Left cardiac atrium (tissue), 4 donors: ENCODE measurements at regions of chr1 and their contacts with region 1.

Region 1: DNA sequence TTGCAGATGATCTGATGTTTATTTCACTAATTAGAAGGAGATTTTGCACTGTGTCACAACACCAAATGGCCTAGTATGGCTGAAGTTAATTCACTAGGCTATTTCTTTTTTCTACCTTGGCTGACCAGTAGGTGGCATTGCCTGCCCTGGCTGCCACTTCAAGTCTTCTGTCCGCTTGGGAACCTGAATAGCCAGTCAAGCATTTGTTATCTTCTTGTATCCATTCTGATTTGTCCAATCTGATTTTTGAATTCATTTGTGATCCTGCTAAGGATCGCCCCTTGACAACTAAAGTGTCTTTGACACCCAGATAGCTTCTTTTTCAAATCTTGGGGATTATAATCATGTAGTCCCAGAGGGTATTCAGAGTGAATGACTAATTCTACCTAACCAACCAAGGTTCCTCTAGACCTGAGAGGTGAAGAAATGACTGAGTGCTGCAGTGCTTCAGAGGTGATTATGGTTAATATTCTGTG is 99.4 kb downstream of the GIPC2 start:
- DNase-seq: peak; percentile 30
- ATAC-seq: peak; percentile 67 to 70

Region 2: GRCh38 chr1:78607334-78607927 is 462.3 kb after region 1 on chr1:
- intact Hi-C with region 1: loop called (anchors 5 kb)
- DNase-seq: no peak
- ATAC-seq: no peak

Region 3: DNA sequence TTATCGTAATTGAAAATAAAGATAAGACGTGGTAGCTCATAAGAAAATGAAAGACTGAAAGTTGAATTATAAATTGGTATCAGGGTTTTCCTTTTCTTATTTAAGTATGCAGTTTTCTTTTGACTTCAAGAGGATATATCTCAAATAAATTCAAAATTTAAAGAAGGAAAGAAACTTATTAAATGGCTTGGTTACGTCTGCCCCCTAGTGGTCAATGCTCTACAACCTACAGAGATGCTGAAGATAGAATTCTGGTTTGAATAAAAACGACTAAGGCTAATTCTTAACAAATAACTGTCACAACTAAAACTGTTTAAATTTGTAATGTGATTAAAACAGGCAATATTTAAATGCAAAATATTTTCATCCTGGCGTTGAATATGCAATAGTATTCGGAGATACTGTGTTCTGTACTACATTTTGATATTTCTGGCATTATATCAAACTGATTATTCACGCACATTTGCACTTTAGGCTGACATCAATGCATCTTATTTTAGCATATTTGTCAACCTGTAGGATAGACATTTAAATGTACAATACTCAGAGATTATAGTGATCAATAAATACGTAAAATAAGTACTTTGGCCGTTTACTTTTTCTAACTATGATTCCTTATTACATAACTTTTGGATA is 531.3 kb after region 1 on chr1:
- intact Hi-C with region 1: loop called (anchors 5 to 10 kb)
- DNase-seq: no peak
- ATAC-seq: peak in 1 of 2 donors; percentile 39